ENCODE measurements at regions of chr6 and their contacts with region 1.

Region 1: DNA sequence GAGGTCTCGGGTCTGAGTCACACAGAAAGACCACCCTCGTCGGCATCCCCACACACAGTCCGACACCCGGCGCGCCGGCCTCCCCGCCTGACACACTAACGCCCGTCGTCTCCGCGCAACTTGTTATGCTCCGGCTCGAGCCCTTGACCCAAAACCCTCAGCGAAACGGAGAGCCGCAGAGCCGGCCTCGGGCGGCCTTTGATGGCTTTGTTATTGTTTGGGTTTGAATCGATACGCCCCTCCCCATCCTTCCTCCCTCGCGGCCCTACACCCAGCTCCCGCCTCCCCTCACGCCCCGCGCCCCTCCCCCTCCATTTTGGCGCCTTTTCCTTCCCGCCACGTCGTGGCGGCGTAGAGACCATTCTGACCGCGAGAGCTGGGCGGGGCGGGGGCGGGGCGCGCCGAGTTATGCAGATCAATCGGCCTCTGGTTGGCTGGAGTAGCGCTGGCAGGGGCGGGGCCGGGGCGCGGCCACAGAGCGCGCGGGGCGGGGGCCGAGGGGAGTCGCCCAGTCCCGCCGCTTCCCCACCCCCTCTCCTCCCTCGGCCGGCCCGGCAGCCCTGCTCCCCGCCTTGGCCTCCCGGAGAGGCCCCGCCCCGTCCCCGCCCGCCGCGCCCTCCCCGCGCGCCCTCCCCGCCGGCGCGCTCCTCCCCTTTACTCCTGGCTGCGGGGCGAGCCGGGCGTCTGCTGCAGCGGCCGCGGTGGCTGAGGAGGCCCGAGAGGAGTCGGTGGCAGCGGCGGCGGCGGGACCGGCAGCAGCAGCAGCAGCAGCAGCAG is at the start of gene PIM1:
- H3K4me3 ChIP-seq: peak within 1 kb of the TSS; percentile 97
- H3K27ac ChIP-seq: peak within 1 kb of the TSS; percentile 94
- H3K4me1 ChIP-seq: peaks cover 3% of the 10 kb centered on the region
- CTCF ChIP-seq: no peak

Region 2: GRCh38 chr6:37059344-37060206 is 110.1 kb before region 1 on chr6:
- CTCF ChIA-PET with region 1: interaction called, 221 read pairs
- POLR2A ChIA-PET with region 1: interaction called, 51 read pairs
- H3K4me3 ChIP-seq: no peak overlapping the region
- H3K27ac ChIP-seq: peak overlapping the region; percentile 53
- H3K4me1 ChIP-seq: peaks cover 6% of the 10 kb centered on the region; the same call in 1 of the 2 replicates
- CTCF ChIP-seq: peak; percentile 29; the same call in 1 of the 2 replicates

Region 3: GRCh38 chr6:37102279-37103168 is 67.2 kb before region 1 on chr6:
- CTCF ChIA-PET with region 1: interaction called, 7 read pairs
- POLR2A ChIA-PET with region 1: interaction called, 51 read pairs
- H3K4me3 ChIP-seq: peak overlapping the region; percentile 23
- H3K27ac ChIP-seq: peak overlapping the region; percentile 79
- H3K4me1 ChIP-seq: peaks cover 26% of the 10 kb centered on the region
- CTCF ChIP-seq: no peak

Region 4: DNA sequence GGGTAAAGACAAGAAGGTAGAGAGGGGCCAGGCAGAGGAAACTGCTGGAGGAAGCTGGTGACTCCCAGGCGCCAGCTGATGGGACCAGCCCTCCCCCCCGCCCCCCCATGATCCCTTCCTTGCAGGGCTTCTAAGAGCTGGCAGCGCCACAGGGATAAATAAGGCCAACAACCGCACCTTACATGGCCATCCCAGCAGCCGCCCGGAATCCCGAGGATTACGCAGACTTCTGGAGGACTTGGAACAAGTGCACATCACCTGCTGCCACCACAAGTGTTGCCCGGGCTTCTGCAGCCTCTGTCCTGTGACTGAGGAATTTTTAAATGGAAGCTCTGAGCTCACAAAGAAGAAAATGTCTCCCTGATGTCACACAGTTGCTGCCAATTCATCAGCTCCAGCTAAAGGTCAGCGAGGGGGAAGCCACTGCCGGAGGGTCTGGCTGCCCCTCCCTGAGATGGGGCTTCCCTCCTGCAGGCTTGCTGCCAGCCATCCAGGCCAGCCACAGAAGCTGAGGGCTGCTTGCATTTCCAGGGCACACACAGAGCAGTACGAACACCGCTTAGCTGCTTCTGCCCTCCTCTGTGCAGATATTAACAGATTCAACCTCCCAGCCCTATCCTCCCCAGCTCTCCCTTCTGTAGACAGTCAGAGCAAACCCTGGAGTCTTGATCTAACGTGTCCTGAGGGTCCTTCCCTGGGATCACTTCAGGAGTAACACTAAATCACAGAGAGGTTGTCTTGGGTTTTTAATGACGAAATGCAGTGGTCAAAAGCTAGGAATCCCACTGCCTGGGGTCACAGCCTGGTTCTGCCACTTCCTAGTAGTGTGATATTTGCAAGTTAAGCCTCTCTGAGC is 38.4 kb before region 1 on chr6:
- CTCF ChIA-PET with region 1: interaction called, 32 read pairs
- POLR2A ChIA-PET with region 1: interaction called, 82 read pairs
- H3K4me3 ChIP-seq: no peak overlapping the region
- H3K27ac ChIP-seq: no peak overlapping the region; the same call in 1 of the 2 replicates
- H3K4me1 ChIP-seq: peaks cover 17% of the 10 kb centered on the region
- CTCF ChIP-seq: no peak

Region 5: DNA sequence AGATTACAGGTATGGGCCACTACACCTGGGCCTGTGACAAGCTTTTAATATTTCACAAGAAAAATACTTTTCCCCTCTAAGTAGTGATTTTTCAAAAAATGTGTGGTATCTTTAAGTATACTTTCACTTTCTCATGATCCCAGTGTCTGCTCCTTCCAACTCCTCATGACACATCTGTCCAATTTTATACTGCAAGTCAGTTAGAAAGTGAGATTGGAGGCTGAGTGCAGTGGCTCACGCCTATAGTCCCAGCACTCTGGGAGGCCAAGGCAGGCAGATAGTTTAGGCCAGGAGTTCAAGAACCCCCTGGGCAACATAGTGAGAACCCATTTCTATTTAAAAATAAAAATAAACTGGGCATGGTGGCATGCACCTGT is 20.5 kb after region 1 on chr6:
- CTCF ChIA-PET with region 1: interaction called, 11 read pairs
- POLR2A ChIA-PET with region 1: interaction called, 6 read pairs
- H3K4me3 ChIP-seq: no peak overlapping the region
- H3K27ac ChIP-seq: no peak overlapping the region
- H3K4me1 ChIP-seq: no peaks in the 10 kb centered on the region
- CTCF ChIP-seq: no peak

Region 6: DNA sequence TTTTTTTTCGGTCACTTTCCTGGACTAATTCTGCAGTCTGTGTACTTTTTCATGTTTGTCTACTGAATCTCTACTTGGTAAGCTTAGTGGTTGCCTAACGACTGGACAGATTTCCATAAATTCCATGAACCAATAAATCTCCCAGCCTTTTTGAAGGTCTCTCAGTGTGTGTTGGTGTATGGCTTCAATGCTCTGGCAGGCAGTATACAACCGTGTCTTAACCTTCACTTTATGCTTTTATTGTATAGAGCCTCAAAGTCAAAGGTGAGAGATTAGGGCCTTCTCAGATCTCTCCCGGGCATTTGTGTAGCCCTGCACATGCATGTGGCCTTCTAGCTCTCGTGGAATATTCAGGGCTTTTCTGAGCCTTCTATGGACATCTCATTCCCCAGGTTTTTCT is 249.0 kb after region 1 on chr6:
- CTCF ChIA-PET with region 1: no interaction called
- POLR2A ChIA-PET with region 1: no interaction called
- H3K4me3 ChIP-seq: no peak overlapping the region
- H3K27ac ChIP-seq: no peak overlapping the region
- H3K4me1 ChIP-seq: no peaks in the 10 kb centered on the region
- CTCF ChIP-seq: no peak

Measured in HEK293 (cell line).